ENCODE measurements at regions of chr13 and their contacts with region 1.

Region 1: GRCh38 chr13:48595431-48596429 is 58.0 kb upstream of the CYSLTR2 start:
- DNase-seq: peak; percentile 57 to 62
- ATAC-seq: peak; percentile 94

Region 2: DNA sequence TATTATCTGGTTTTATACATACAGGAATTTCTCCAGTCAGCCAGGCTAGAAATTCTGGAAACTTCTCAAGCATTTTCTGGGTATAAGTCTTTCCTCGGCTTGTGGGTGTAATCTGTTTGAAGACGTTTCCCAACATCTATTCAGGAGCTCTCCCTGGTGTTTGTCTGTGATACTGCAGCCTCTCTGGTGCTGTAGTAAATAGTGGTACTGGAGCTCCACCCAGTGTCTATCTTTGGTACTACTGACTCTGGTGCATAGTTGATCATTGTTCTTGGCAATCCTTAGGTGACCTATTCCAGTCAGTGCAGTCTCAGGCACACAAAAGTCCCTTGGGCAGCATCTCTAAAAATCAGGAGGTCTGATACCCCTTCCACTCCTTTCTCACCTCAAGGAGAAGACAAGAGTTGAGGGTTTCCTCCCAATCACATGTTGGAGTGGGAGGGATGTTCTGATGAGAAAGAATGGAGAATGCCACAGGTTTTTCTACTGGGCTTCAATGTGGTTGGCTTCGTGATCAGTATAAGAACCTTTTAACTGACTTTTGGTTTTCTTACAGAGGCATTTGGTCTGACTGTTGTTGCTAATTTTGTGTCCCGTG is 173.5 kb after region 1 on chr13:
- intact Hi-C with region 1: loop called in 1 of 2 experiments (anchors 5 kb)
- DNase-seq: peak; percentile 69 to 90
- ATAC-seq: peak; percentile 95